ENCODE measurements at regions of chr11 and their contacts with region 1.

Region 1: GRCh38 chr11:64204464-64204989 is 2.0 kb upstream of the FERMT3 start:
- DNase-seq: peak; percentile 87
- ATAC-seq: peak; percentile 10
- H3K4me3 Mint-ChIP-seq: peak overlapping the region; percentile 53
- H3K27ac Mint-ChIP-seq: peak overlapping the region; percentile 65
- H3K4me1 Mint-ChIP-seq: peaks cover 44% of the 10 kb centered on the region
- H3K27me3 Mint-ChIP-seq: no peaks in the 10 kb centered on the region
- CTCF ChIP-seq: peak; percentile 62

Region 2: GRCh38 chr11:64185816-64186498 is 18.6 kb before region 1 on chr11 and contains the start of gene STIP1:
- CTCF ChIA-PET with region 1: interaction called, 59 read pairs
- POLR2A ChIA-PET with region 1: interaction called, 206 read pairs
- intact Hi-C with region 1: no loop called
- DNase-seq: peak; percentile 99
- ATAC-seq: peak; percentile 89
- H3K4me3 Mint-ChIP-seq: no peak within 1 kb of the TSS
- H3K27ac Mint-ChIP-seq: peak within 1 kb of the TSS; percentile 98
- H3K4me1 Mint-ChIP-seq: peaks cover 37% of the 10 kb centered on the region
- H3K27me3 Mint-ChIP-seq: no peaks in the 10 kb centered on the region
- CTCF ChIP-seq: no peak
- total RNA-seq, gene STIP1: 396 to 416 TPM

Region 3: DNA sequence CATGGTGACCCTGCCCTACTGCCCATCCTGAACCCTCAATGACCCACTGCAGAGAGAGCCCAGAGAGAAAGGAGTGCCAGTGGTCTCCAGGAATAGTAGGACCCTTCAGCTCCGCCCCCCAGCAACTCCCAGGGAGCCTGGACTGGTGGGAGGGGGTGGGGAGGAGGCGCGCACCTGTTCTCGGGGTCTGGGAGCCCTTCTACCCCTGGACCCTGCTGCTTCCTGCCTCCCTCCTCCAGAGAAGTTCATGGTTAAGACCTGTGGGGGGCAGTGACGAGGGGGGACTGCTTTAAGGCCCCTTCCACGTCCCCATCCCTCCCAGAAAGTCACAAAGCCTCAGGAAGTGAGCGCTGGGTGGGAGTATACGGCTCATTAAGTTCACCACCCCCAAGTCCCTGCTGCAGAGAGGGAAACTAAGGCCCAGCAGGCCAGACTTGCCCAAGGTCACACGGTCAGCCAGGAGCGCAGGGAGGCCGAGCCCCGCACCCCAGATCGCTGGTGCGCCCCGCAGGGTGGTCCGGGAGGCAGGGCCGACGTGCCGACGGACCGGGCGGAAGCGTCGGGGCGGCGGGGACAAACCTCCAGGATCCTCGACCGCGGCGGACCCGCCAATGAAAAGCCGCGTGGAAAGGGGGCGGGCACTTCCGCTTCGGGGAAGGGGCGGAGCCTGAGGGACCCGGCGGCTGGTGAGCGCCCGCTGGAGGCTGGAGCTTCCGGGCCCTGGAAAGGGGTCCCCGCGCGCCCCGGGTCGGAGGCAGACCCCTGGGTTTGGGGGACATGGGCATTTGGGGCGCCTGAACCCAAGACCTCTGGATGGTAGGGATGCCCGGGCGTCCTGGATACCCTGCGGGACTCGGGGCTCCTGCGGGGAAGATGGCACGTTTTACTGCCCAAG is 21.3 kb after region 1 on chr11 and contains the starts of genes NUDT22 and TRPT1:
- CTCF ChIA-PET with region 1: interaction called, 45 read pairs
- POLR2A ChIA-PET with region 1: interaction called, 151 read pairs
- intact Hi-C with region 1: no loop called
- DNase-seq: peak; percentile 94
- ATAC-seq: peak; percentile 71
- H3K4me3 Mint-ChIP-seq: peak within 1 kb of the TSS; percentile 89
- H3K27ac Mint-ChIP-seq: peak within 1 kb of the TSS; percentile 87
- H3K4me1 Mint-ChIP-seq: peaks cover 30% of the 10 kb centered on the region
- H3K27me3 Mint-ChIP-seq: no peaks in the 10 kb centered on the region
- CTCF ChIP-seq: peak; percentile 42
- total RNA-seq, gene NUDT22: 66.0 to 69.2 TPM
- total RNA-seq, gene TRPT1: 33.7 to 41.5 TPM

Region 4: GRCh38 chr11:64246871-64247728 is 42.6 kb after region 1 on chr11 and contains the start of gene PPP1R14B:
- CTCF ChIA-PET with region 1: interaction called, 42 read pairs
- POLR2A ChIA-PET with region 1: interaction called, 61 read pairs
- intact Hi-C with region 1: no loop called
- DNase-seq: peak; percentile 89
- ATAC-seq: peak; percentile 55
- H3K4me3 Mint-ChIP-seq: peak within 1 kb of the TSS; percentile 94
- H3K27ac Mint-ChIP-seq: peak within 1 kb of the TSS; percentile 93
- H3K4me1 Mint-ChIP-seq: peaks cover 33% of the 10 kb centered on the region
- H3K27me3 Mint-ChIP-seq: no peaks in the 10 kb centered on the region
- CTCF ChIP-seq: no peak
- total RNA-seq, gene PPP1R14B: 285 to 287 TPM

Region 5: GRCh38 chr11:64317957-64318693 is 113.6 kb after region 1 on chr11 and contains the start of gene PRDX5:
- CTCF ChIA-PET with region 1: interaction called, 13 read pairs
- POLR2A ChIA-PET with region 1: interaction called, 6 read pairs
- intact Hi-C with region 1: no loop called
- DNase-seq: peak; percentile 93
- ATAC-seq: peak; percentile 86
- H3K4me3 Mint-ChIP-seq: peak within 1 kb of the TSS; percentile 94
- H3K27ac Mint-ChIP-seq: peak within 1 kb of the TSS; percentile 100
- H3K4me1 Mint-ChIP-seq: peaks cover 22% of the 10 kb centered on the region
- H3K27me3 Mint-ChIP-seq: no peaks in the 10 kb centered on the region
- CTCF ChIP-seq: peak; percentile 24
- total RNA-seq, gene PRDX5: 103 to 105 TPM